PC-9 (cell line): ENCODE measurements at regions of chr2 and their contacts with region 1.

Region 1: GRCh38 chr2:231227309-231228162 is 29.1 kb downstream of the ARMC9 start:
- DNase-seq: peak; percentile 52 to 65
- H3K4me3 ChIP-seq: no peak overlapping the region
- H3K27ac ChIP-seq: no peak overlapping the region
- H3K4me1 ChIP-seq: no peaks in the 10 kb centered on the region
- H3K27me3 ChIP-seq: no peaks in the 10 kb centered on the region
- CTCF ChIP-seq: peak; percentile 86

Region 2: GRCh38 chr2:230864598-230865306 is 362.8 kb before region 1 on chr2 and contains the start of gene ITM2C:
- CTCF ChIA-PET with region 1: no interaction called
- POLR2A ChIA-PET with region 1: no interaction called
- intact Hi-C with region 1: no loop called
- DNase-seq: peak in 1 of 2 experiments; percentile 78
- H3K4me3 ChIP-seq: peak within 1 kb of the TSS; percentile 84
- H3K27ac ChIP-seq: no peak within 1 kb of the TSS
- H3K4me1 ChIP-seq: no peaks in the 10 kb centered on the region; the same call in 1 of the 2 replicates
- H3K27me3 ChIP-seq: peaks cover 13% of the 10 kb centered on the region; the same call in 1 of the 2 replicates
- CTCF ChIP-seq: no peak
- total RNA-seq, gene ITM2C: 76.0 and 96.4 TPM in 2 replicates

Region 3: GRCh38 chr2:231104115-231104713 is 123.3 kb before region 1 on chr2:
- CTCF ChIA-PET with region 1: no interaction called
- POLR2A ChIA-PET with region 1: no interaction called
- intact Hi-C with region 1: loop called (anchors 2 kb)
- DNase-seq: peak in 1 of 2 experiments; percentile 31
- H3K4me3 ChIP-seq: no peak overlapping the region
- H3K27ac ChIP-seq: no peak overlapping the region
- H3K4me1 ChIP-seq: no peaks in the 10 kb centered on the region
- H3K27me3 ChIP-seq: no peaks in the 10 kb centered on the region
- CTCF ChIP-seq: peak; percentile 71

Region 4: GRCh38 chr2:231399853-231400680 is 172.5 kb after region 1 on chr2:
- CTCF ChIA-PET with region 1: interaction called, 12 read pairs
- POLR2A ChIA-PET with region 1: no interaction called
- intact Hi-C with region 1: no loop called
- DNase-seq: peak; percentile 68 to 70
- H3K4me3 ChIP-seq: peak overlapping the region; percentile 13; the same call in 1 of the 2 replicates
- H3K27ac ChIP-seq: peak overlapping the region; percentile 76
- H3K4me1 ChIP-seq: peaks cover 38% of the 10 kb centered on the region
- H3K27me3 ChIP-seq: no peaks in the 10 kb centered on the region
- CTCF ChIP-seq: peak; percentile 47; the same call in 1 of the 2 replicates